Endothelial cell of umbilical vein (primary cell): ENCODE measurements at regions of chr2 and their contacts with region 1.

Region 1: GRCh38 chr2:33210626-33211025 is 263.9 kb downstream of the LTBP1 start:
- DNase-seq: peak; percentile 94
- H3K4me3 ChIP-seq: no peak overlapping the region
- H3K27ac ChIP-seq: peak overlapping the region; percentile 97
- H3K4me1 ChIP-seq: peaks cover 64% of the 10 kb centered on the region
- H3K27me3 ChIP-seq: no peaks in the 10 kb centered on the region
- CTCF ChIP-seq: no peak
- POLR2A ChIP-seq: peak; percentile 43

Region 2: DNA sequence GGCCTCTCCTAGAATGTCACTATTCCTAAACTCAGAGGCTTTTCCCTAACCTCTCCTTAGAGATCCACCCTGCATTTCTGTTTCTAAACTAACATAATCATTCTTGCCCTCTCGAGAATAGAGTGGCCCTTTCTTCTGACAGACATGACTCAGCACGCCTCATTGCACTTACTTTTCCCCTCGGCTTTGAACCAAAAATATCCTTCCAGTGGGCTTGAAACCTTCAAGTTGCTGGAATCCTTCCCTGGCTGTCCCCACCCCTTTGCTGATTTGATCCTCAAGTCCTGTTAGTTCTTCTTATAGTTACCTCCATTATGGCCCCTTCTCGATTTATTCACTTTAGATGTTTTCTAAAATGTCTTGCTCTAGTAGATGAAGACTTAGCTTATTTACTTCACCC is 105.9 kb before region 1 on chr2:
- CTCF ChIA-PET with region 1: no interaction called
- POLR2A ChIA-PET with region 1: no interaction called
- dilution Hi-C with region 1: no loop called
- intact Hi-C with region 1: loop called (anchors 5 kb)
- DNase-seq: peak; percentile 77
- H3K4me3 ChIP-seq: no peak overlapping the region
- H3K27ac ChIP-seq: peak overlapping the region; percentile 72
- H3K4me1 ChIP-seq: peaks cover 18% of the 10 kb centered on the region
- H3K27me3 ChIP-seq: no peaks in the 10 kb centered on the region
- CTCF ChIP-seq: no peak
- POLR2A ChIP-seq: no peak

Region 3: GRCh38 chr2:33242845-33243244 is 32.2 kb after region 1 on chr2:
- CTCF ChIA-PET with region 1: interaction called, 3 read pairs
- POLR2A ChIA-PET with region 1: no interaction called
- dilution Hi-C with region 1: no loop called
- intact Hi-C with region 1: loop called (anchors 1 kb)
- DNase-seq: peak; percentile 90
- H3K4me3 ChIP-seq: no peak overlapping the region
- H3K27ac ChIP-seq: peak overlapping the region; percentile 72
- H3K4me1 ChIP-seq: peaks cover 48% of the 10 kb centered on the region
- H3K27me3 ChIP-seq: no peaks in the 10 kb centered on the region
- CTCF ChIP-seq: no peak
- POLR2A ChIP-seq: no peak

Region 4: GRCh38 chr2:33291278-33292013 is 80.8 kb after region 1 on chr2:
- CTCF ChIA-PET with region 1: interaction called, 3 read pairs
- POLR2A ChIA-PET with region 1: no interaction called
- dilution Hi-C with region 1: no loop called
- intact Hi-C with region 1: loop called (anchors 1 kb)
- DNase-seq: peak; percentile 99
- H3K4me3 ChIP-seq: peak overlapping the region in 2 of 3 experiments; percentile 20 to 29
- H3K27ac ChIP-seq: peak overlapping the region; percentile 92
- H3K4me1 ChIP-seq: peaks cover 40% of the 10 kb centered on the region
- H3K27me3 ChIP-seq: no peaks in the 10 kb centered on the region
- CTCF ChIP-seq: no peak
- POLR2A ChIP-seq: no peak

Region 5: DNA sequence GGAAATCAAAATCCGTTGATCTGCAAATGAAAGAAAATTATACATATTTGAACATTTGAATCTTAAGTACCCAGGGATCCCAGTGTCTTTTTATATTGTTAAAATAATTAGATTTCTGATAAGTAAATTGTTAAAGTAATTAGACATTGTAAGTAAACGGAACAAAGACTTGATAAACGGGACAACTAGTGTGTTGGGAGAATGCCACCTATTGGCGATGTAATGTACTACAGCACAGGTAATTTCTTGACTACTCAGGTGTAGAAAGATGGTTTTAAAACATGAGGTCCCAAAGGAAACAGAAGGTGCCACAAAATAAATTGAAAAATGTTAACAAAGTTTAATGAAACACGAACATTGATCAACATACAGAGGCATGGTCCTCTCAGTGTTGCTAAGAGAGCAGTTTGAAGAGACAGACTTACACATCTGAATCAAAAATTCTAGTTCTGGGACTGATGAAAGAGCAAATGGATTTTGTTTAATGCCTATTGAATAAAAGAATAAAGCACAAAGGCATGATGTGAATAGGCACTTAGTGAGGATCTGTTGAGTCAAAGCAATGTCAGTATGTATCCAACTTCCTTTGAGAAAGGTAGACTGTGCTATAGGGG is 162.4 kb after region 1 on chr2:
- CTCF ChIA-PET with region 1: no interaction called
- POLR2A ChIA-PET with region 1: no interaction called
- dilution Hi-C with region 1: no loop called
- intact Hi-C with region 1: loop called (anchors 2 kb)
- DNase-seq: peak; percentile 81
- H3K4me3 ChIP-seq: no peak overlapping the region
- H3K27ac ChIP-seq: no peak overlapping the region
- H3K4me1 ChIP-seq: peaks cover 6% of the 10 kb centered on the region
- H3K27me3 ChIP-seq: no peaks in the 10 kb centered on the region
- CTCF ChIP-seq: peak; percentile 48 to 55
- POLR2A ChIP-seq: no peak